MCF 10A (cell line): ENCODE measurements at regions of chr5 and their contacts with region 1.

Region 1: DNA sequence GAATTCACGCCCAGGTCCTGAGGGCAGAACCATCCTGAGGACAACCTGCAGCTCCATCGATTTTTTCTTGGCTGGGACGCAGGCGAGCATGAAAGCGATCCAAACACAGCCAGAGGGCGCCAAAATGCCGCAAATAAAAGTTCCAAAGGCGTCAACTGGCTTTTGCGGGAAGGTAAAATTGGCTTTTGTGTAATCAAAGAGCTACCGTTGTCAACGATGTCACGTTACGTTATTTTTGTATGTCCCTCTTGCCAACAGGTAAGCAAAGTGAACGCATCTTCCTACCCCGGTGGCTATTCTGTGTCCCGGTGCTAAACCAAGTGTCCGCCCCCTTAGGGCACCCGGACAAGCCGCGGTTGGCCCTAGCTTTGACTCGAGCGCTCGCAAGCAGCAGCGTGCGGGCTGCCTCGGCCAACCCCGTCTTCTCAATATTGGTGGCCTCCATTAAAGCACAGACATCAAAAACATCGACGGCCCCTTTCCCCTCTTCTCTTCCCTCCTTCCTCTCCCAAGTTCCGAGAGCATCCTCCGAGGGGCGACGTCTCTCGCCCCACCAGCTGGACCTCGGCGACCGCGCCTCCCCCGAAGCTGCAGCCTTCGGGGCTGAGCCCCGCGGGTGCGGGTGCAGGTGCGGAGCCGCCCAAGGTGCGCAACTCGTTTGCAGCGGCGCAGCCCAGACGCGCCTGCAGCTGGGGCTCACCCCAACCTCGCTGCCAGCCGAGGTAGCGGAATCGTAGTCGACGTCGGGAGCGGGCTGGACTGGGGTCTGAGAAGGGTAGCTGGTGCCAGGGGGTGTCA is 1.1 kb upstream of the BASP1 start:
- DNase-seq: peak; percentile 91
- H3K4me3 Mint-ChIP-seq: peak overlapping the region; percentile 83
- H3K27ac Mint-ChIP-seq: peak overlapping the region; percentile 52
- H3K4me1 Mint-ChIP-seq: peaks cover 23% of the 10 kb centered on the region
- H3K27me3 Mint-ChIP-seq: no peaks in the 10 kb centered on the region
- CTCF ChIP-seq: peak; percentile 69

Region 2: DNA sequence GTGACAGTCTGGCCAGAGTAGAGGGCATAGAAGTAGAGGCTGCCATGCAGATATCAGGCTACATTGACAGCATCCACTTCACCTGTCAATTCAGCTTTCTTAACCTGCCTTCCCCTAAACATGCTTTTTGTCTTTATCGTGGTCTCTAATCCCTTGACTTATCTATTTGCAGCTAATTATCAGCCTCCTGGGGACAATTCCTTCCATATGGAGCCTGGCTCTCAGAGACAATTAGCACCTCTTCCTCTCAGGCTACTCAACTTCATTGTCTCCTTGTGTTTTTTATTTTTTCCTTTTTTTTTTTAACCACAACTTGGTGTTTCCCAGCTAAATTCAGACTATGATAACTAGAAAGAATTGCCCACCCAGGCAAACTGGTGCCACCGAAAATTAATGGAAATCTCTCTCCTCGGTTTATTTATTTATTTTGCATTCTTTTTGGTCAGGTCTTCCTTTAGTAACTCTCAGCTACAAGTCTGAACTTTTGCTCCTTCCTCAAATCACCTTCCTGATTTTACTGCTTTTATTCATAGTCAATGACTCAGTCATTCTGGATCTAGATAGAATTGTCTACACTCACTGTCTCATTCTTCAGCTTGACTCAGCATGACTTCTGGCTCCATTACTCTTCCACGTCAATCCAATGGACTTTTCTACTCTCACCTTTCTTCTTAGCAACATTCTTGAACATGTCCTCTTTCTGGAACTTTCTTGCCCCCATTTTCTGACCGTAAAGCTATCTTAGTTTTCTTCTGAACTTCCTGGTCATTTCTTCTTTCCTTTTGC is 62.0 kb before region 1 on chr5:
- CTCF ChIA-PET with region 1: no interaction called
- POLR2A ChIA-PET with region 1: no interaction called
- intact Hi-C with region 1: no loop called
- DNase-seq: peak; percentile 56
- H3K4me3 Mint-ChIP-seq: no peak overlapping the region
- H3K27ac Mint-ChIP-seq: no peak overlapping the region
- H3K4me1 Mint-ChIP-seq: peaks cover 31% of the 10 kb centered on the region
- H3K27me3 Mint-ChIP-seq: no peaks in the 10 kb centered on the region
- CTCF ChIP-seq: no peak

Region 3: GRCh38 chr5:17204133-17204489 is 12.3 kb before region 1 on chr5:
- CTCF ChIA-PET with region 1: interaction called, 24 read pairs
- POLR2A ChIA-PET with region 1: interaction called, 3 read pairs
- intact Hi-C with region 1: no loop called
- DNase-seq: no peak
- H3K4me3 Mint-ChIP-seq: no peak overlapping the region
- H3K27ac Mint-ChIP-seq: no peak overlapping the region
- H3K4me1 Mint-ChIP-seq: no peaks in the 10 kb centered on the region
- H3K27me3 Mint-ChIP-seq: peaks cover 12% of the 10 kb centered on the region
- CTCF ChIP-seq: no peak

Region 4: DNA sequence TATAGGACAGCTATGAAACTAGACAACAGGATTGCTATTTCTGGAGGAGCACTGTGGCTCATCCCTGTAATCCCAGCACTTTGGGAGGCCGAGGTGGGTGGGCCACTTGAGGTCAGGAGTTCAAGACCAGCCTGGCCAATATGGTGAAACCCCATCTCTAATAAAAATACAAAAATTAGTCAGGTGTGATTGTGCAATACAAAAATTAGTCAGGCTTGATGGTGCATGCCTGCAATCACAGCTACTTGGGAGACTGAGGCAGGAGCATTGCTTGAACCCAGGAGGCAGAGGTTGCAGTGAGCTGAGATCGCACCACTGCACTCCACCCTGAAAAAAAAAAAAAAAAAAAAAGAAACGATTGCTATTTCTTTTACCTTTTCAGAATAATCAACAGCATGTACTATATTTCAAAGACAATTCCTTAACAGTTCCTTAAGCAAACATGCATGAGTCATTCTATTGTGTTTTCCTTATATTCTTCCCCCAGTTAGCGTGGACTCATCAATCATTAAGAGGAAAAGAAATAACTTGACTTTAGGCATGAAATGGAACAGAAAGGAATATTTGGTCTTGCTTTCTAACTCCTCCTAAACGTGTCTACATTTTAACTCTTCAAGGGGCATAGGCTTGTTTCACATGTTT is 580.5 kb after region 1 on chr5:
- CTCF ChIA-PET with region 1: interaction called, 3 read pairs
- POLR2A ChIA-PET with region 1: no interaction called
- intact Hi-C with region 1: loop called (anchors 10 kb)
- DNase-seq: peak; percentile 72
- H3K4me3 Mint-ChIP-seq: no peak overlapping the region
- H3K27ac Mint-ChIP-seq: no peak overlapping the region
- H3K4me1 Mint-ChIP-seq: peaks cover 7% of the 10 kb centered on the region
- H3K27me3 Mint-ChIP-seq: no peaks in the 10 kb centered on the region
- CTCF ChIP-seq: no peak

Region 5: DNA sequence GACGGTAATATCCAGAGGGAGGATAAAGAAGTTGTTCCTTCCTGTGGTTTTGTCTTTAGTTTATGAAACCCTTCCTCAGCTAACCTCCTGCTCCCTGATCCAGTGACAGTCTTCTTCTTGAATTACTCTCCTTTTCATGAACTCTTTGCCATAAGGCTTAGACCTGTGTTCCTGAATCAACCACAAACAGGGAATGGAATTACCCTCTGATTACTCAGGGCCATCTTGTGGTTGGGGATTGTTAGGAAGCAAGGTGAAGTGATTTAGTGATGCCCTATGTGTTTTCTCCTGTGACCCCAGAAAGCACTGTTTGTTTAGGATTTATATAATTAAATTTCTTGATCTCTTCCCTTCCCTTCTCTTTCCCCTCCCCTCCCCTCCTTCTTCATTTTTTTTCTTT is 827.0 kb after region 1 on chr5:
- CTCF ChIA-PET with region 1: no interaction called
- POLR2A ChIA-PET with region 1: no interaction called
- intact Hi-C with region 1: loop called (anchors 2 kb)
- DNase-seq: peak; percentile 23
- H3K4me3 Mint-ChIP-seq: no peak overlapping the region
- H3K27ac Mint-ChIP-seq: no peak overlapping the region
- H3K4me1 Mint-ChIP-seq: no peaks in the 10 kb centered on the region
- H3K27me3 Mint-ChIP-seq: no peaks in the 10 kb centered on the region
- CTCF ChIP-seq: no peak

Region 6: DNA sequence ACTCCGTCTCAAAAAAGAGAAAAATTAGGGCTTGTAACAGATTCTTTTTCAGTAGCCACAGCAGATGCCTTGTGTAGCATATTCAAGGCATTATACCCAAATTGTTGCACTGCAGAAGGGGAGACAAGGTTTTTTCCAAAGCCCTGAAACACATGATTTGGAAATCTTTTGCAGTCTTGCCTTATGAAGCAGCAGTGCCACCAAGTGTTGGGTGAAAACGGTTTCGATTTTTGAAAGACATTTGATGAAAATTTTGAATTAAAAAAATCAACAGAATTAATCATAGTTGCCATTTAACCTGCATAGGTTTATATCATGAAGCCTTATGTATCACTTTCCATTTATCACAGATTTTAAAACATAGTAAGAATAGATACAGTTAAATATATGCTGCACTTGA is 897.3 kb after region 1 on chr5:
- CTCF ChIA-PET with region 1: interaction called, 106 read pairs
- POLR2A ChIA-PET with region 1: interaction called, 8 read pairs
- intact Hi-C with region 1: loop called (anchors 1 kb)
- DNase-seq: peak; percentile 41
- H3K4me3 Mint-ChIP-seq: peak overlapping the region; percentile 49
- H3K27ac Mint-ChIP-seq: peak overlapping the region; percentile 37
- H3K4me1 Mint-ChIP-seq: peaks cover 8% of the 10 kb centered on the region
- H3K27me3 Mint-ChIP-seq: no peaks in the 10 kb centered on the region
- CTCF ChIP-seq: peak; percentile 48

Region 7: DNA sequence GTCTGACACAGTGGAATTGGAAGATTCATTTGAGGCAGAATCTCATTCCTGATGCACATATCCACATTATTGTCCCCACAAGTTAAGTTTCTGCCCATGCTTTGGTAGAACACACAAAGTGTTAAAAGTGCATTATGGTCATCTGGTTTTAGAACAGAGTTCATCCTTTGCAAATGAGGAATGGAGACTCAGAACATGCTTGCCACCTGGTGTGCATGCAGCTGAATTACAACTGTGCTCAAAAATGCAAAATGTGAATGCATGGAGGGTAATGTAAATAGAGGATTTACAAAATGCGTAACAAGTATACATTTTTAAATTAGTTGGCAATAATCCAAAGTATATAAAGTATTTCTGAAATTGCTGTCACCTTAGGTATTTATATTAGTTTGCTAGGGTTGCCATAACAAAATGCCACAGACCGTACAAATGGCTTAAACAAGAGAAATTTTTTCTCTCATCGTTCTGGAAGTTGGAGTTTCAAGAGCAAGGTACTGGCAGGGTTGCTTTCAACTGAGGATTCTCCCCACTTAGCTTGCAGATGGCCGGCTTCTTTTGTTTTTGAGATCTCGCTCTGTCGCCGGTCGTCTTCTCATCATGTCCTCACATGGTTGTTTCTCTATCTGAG is 1089.0 kb after region 1 on chr5:
- CTCF ChIA-PET with region 1: interaction called, 111 read pairs
- POLR2A ChIA-PET with region 1: interaction called, 20 read pairs
- intact Hi-C with region 1: loop called (anchors 1 kb)
- DNase-seq: peak; percentile 51
- H3K4me3 Mint-ChIP-seq: no peak overlapping the region
- H3K27ac Mint-ChIP-seq: no peak overlapping the region
- H3K4me1 Mint-ChIP-seq: peaks cover 7% of the 10 kb centered on the region
- H3K27me3 Mint-ChIP-seq: no peaks in the 10 kb centered on the region
- CTCF ChIP-seq: peak; percentile 80

Region 8: GRCh38 chr5:18699681-18700080 is 1483.3 kb after region 1 on chr5:
- CTCF ChIA-PET with region 1: no interaction called
- POLR2A ChIA-PET with region 1: no interaction called
- intact Hi-C with region 1: loop called (anchors 10 kb)
- DNase-seq: no peak
- H3K4me3 Mint-ChIP-seq: no peak overlapping the region
- H3K27ac Mint-ChIP-seq: no peak overlapping the region
- H3K4me1 Mint-ChIP-seq: peaks cover 7% of the 10 kb centered on the region
- H3K27me3 Mint-ChIP-seq: no peaks in the 10 kb centered on the region
- CTCF ChIP-seq: no peak